B cell (primary cell): ENCODE measurements at regions of chr12 and their contacts with region 1.

Region 1: DNA sequence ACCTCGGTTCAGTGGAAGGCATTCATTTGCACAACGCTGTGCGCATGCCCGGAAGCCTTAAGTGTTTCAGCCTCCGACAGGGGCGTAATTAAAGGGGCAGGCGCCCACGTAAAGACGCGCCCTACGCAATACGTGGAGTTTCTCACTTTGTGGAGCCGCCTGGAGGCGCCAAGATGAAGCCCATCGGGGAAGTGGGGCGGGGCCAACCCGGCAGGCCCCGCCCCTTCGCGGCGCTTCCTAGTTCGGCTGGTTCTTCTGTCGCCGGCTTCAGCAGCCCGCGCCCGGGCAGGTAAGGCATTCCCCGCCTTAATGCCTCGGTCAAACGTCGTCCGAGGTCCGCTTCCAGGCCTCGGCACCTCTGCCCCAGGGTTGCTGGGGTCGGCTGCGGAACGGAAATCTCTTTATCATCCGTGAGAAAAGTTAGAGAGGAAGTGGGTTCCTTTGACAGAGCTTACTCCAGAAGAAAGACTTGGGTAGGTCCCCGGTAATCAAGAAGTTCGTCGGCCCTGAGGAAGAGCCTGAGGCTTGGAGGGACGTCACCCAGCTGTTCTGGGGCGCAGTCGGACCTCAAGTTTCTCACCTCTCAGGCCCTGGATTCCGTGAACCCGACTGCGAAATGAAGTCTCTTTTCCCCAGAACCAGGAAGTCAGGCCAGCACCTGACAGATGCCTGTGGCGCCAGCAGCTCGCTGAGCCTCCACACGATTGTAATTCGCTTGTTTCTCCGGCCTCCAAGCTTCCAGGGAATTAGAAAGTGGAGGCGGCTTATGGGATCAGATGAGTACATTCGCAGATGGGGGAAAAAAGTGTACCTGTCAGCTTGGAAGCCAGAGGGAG is at the starts of genes IRAK4 and PUS7L:
- DNase-seq: peak; percentile 98
- ATAC-seq: peak; percentile 99
- H3K4me3 ChIP-seq: peak within 1 kb of the TSS; percentile 79 to 98 (median 92)
- H3K4me3 Mint-ChIP-seq: peak within 1 kb of the TSS; percentile 97
- H3K27ac ChIP-seq: peak within 1 kb of the TSS; percentile 95 to 96
- H3K27ac Mint-ChIP-seq: peak within 1 kb of the TSS; percentile 91
- H3K4me1 ChIP-seq: peaks cover 36% of the 10 kb centered on the region in 2 donors
- H3K4me1 Mint-ChIP-seq: peaks cover 70% of the 10 kb centered on the region
- H3K27me3 ChIP-seq: no peaks in the 10 kb centered on the region
- H3K27me3 Mint-ChIP-seq: no peaks in the 10 kb centered on the region
- CTCF ChIP-seq: peak; percentile 35
- total RNA-seq, gene IRAK4: 47.0 and 52.7 TPM in 2 replicates
- total RNA-seq, gene PUS7L: 23.5 and 24.2 TPM in 2 replicates

Region 2: DNA sequence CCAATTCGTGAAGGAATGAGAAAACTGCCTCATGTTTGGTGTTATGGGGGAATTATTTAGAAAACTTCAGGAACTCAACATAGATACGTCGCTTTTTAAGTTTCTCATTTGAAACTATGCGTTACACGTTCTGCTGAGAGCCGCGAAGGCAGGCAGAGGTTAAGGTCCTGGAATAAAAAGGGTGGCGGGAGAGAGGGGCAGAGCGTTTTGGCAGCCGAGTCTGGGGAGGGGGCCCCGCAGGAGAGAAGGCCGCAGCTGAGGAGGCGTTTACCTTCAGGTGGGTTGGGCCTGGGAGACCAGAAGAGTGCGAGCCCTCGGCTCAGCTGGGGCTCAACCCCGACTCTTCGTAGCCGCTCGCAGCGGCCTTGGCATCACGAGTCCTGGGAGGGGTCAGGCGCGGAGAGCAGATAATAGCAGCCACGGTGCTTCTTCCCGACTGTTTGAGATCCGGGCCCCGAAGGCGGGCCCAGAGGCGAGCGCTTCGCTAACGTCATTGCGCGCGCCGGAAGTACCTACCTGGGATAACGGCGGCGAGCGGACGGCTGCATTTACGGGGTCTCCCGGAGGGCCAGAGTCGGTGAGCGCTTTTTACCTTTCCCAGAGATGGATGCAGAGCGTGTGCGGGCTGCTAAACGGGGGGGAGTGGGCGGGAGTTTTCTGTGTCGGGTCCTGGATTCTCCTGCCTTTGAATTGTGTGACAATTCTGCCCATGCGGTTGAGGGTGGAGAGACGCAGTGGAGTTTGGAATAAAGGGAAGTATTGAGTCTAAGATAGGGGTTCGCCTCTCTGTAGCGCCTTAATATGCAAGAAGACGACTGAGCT is 1433.1 kb before region 1 on chr12 and contains the starts of genes PPHLN1 and ZCRB1:
- CTCF ChIA-PET with region 1: no interaction called
- POLR2A ChIA-PET with region 1: no interaction called
- intact Hi-C with region 1: loop called (anchors 10 kb)
- DNase-seq: peak; percentile 87
- ATAC-seq: peak; percentile 88
- H3K4me3 ChIP-seq: peak within 1 kb of the TSS; percentile 60 to 98 (median 84)
- H3K4me3 Mint-ChIP-seq: peak within 1 kb of the TSS; percentile 95
- H3K27ac ChIP-seq: peak within 1 kb of the TSS; percentile 64 to 92
- H3K27ac Mint-ChIP-seq: peak within 1 kb of the TSS; percentile 96
- H3K4me1 ChIP-seq: peaks cover 29 to 39% of the 10 kb centered on the region in 2 donors
- H3K4me1 Mint-ChIP-seq: peaks cover 53% of the 10 kb centered on the region
- H3K27me3 ChIP-seq: no peaks in the 10 kb centered on the region
- H3K27me3 Mint-ChIP-seq: no peaks in the 10 kb centered on the region
- CTCF ChIP-seq: no peak
- total RNA-seq, gene PPHLN1: 99.5 and 104 TPM in 2 replicates
- total RNA-seq, gene ZCRB1: 23.2 and 27.1 TPM in 2 replicates

Region 3: GRCh38 chr12:43453761-43454160 is 305.2 kb before region 1 on chr12:
- CTCF ChIA-PET with region 1: no interaction called
- POLR2A ChIA-PET with region 1: no interaction called
- intact Hi-C with region 1: no loop called
- DNase-seq: no peak
- ATAC-seq: no peak
- H3K4me3 ChIP-seq: no peak overlapping the region
- H3K4me3 Mint-ChIP-seq: no peak overlapping the region
- H3K27ac ChIP-seq: no peak overlapping the region
- H3K27ac Mint-ChIP-seq: no peak overlapping the region
- H3K4me1 ChIP-seq: no peaks in the 10 kb centered on the region
- H3K4me1 Mint-ChIP-seq: no peaks in the 10 kb centered on the region
- H3K27me3 ChIP-seq: no peaks in the 10 kb centered on the region
- H3K27me3 Mint-ChIP-seq: no peaks in the 10 kb centered on the region
- CTCF ChIP-seq: no peak

Region 4: GRCh38 chr12:43744826-43745225 is 14.1 kb before region 1 on chr12:
- CTCF ChIA-PET with region 1: no interaction called
- POLR2A ChIA-PET with region 1: no interaction called
- intact Hi-C with region 1: no loop called
- DNase-seq: no peak
- ATAC-seq: no peak
- H3K4me3 ChIP-seq: no peak overlapping the region
- H3K4me3 Mint-ChIP-seq: no peak overlapping the region
- H3K27ac ChIP-seq: no peak overlapping the region
- H3K27ac Mint-ChIP-seq: no peak overlapping the region
- H3K4me1 ChIP-seq: no peaks in the 10 kb centered on the region
- H3K4me1 Mint-ChIP-seq: no peaks in the 10 kb centered on the region
- H3K27me3 ChIP-seq: no peaks in the 10 kb centered on the region
- H3K27me3 Mint-ChIP-seq: no peaks in the 10 kb centered on the region
- CTCF ChIP-seq: no peak

Region 5: DNA sequence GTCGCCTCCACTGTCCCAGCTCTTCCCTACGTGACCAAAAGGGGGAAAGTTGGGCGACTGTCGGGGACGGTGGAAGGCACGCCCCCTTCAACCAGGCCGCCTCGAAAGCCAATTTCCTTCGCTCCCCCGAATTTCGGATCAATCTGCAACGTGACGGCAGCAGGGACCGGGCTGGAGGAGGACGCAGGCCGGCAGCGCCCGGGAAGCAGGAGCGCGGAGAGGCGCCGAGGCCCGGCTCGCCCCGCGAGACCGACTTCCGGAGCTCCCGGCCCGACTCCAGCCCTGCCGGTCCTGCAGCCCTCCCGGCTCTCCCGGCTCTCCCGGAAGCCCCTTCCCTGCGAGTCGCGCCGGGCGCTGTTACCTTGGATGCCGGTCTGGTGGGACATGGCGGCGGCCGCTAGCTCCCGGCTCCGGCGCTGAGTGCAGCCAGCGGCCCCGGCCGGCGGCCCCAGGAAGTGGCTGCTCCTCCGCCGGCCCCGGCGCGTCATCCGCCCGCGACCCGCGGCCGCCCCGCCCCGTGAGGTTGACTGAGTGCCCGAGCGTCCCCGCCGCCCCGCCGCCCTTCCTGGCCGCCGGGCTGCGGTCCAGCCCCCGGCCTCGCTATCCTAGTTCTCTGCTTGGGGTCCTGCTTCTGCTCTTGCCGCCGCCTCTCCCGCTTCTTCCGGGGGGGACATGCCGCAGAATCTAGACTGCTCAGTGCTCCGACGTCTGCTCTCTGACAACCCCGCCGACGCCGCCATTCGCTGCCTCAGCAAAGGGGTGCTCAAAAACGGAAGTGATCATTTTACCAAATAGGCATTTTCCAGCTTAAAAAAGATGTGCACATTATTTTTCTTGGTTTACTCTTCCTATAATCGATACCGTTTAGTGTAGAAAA is 47.2 kb after region 1 on chr12 and contains the start of gene TWF1:
- CTCF ChIA-PET with region 1: interaction called, 4 read pairs
- POLR2A ChIA-PET with region 1: interaction called, 29 read pairs
- intact Hi-C with region 1: loop called (anchors 1 kb)
- DNase-seq: peak; percentile 93
- ATAC-seq: peak; percentile 95
- H3K4me3 ChIP-seq: peak within 1 kb of the TSS; percentile 78 to 94 (median 85)
- H3K4me3 Mint-ChIP-seq: peak within 1 kb of the TSS; percentile 99
- H3K27ac ChIP-seq: peak within 1 kb of the TSS; percentile 87 to 96
- H3K27ac Mint-ChIP-seq: peak within 1 kb of the TSS; percentile 100
- H3K4me1 ChIP-seq: peaks cover 11 to 28% of the 10 kb centered on the region in 2 donors
- H3K4me1 Mint-ChIP-seq: peaks cover 24% of the 10 kb centered on the region
- H3K27me3 ChIP-seq: no peaks in the 10 kb centered on the region
- H3K27me3 Mint-ChIP-seq: no peaks in the 10 kb centered on the region
- CTCF ChIP-seq: peak; percentile 31
- total RNA-seq, gene TWF1: 30.0 and 34.3 TPM in 2 replicates

Region 6: GRCh38 chr12:43882578-43883178 is 123.7 kb after region 1 on chr12:
- CTCF ChIA-PET with region 1: interaction called, 10 read pairs
- POLR2A ChIA-PET with region 1: no interaction called
- intact Hi-C with region 1: no loop called
- DNase-seq: peak; percentile 60
- ATAC-seq: peak; percentile 61
- H3K4me3 ChIP-seq: no peak overlapping the region
- H3K4me3 Mint-ChIP-seq: no peak overlapping the region
- H3K27ac ChIP-seq: no peak overlapping the region
- H3K27ac Mint-ChIP-seq: no peak overlapping the region
- H3K4me1 ChIP-seq: no peaks in the 10 kb centered on the region
- H3K4me1 Mint-ChIP-seq: no peaks in the 10 kb centered on the region
- H3K27me3 ChIP-seq: no peaks in the 10 kb centered on the region
- H3K27me3 Mint-ChIP-seq: no peaks in the 10 kb centered on the region
- CTCF ChIP-seq: peak; percentile 94